Heart left ventricle (tissue), 16 donors: ENCODE measurements at regions of chr5 and their contacts with region 1.

Region 1: DNA sequence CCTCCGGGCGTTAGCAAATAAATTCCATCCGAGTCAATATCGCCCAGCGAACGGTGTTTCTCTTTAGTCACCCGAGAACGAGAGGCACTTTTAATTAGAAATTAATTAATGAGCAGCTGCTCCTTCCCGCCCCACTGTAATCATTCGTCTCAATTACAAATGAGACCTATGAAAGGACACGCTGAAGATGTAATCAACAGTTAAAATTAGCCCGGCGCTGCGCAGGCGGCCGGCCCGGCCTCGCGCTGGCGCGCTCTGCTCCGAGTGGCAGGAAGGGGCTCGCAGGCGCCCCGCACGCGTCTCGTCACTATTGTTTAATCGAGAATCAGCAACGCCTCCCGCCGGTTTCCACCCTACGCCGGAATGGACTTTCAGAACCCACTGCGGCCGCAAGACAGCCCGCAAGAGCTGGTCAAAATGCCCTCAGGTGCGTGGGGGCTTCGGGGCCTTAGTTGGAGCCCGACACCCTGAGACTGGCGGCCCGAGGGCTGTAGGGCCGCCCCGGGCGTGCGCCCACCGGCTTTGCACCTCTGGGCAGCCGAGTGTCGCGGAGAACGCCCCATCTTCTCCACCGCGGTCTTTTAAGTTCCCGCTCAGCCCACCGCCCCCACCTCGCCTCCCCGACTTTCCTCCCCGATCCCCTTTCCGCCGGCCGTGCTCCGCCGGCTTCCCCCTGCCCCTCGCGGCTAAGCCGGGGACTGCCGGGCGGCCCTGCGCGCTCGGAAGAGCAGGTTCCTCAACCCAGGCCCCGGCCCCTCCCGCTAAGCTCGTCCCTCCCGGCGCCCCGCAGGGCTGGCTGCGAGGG is 597 bp upstream of the IRX4 start:
- DNase-seq: peak in 3 of 5 donors; percentile 56 to 65 (median 58)
- ATAC-seq: peak in 3 of 4 donors; percentile 47 to 62 (median 52)
- H3K4me3 ChIP-seq: peak overlapping the region; percentile 13 to 61 (median 48)
- H3K27ac ChIP-seq: peak overlapping the region in 11 of 12 donors; percentile 32 to 87 (median 71)
- H3K4me1 ChIP-seq: peaks cover 0 to 64% (median 17%) of the 10 kb centered on the region in 12 donors
- H3K27me3 ChIP-seq: peaks cover 30 to 95% (median 59%) of the 10 kb centered on the region in 9 donors
- CTCF ChIP-seq: peak in 7 of 12 donors; percentile 4 to 47 (median 26)
- POLR2A ChIP-seq: peak in 1 of 2 donors; percentile 26

Region 2: GRCh38 chr5:1808439-1808838 is 74.9 kb before region 1 on chr5:
- intact Hi-C with region 1: loop called in 6 of 10 experiments (anchors 5 to 10 kb)
- DNase-seq: no peak
- ATAC-seq: no peak
- H3K4me3 ChIP-seq: no peak overlapping the region
- H3K27ac ChIP-seq: no peak overlapping the region
- H3K4me1 ChIP-seq: peaks cover 0 to 61% (median 13%) of the 10 kb centered on the region in 12 donors
- H3K27me3 ChIP-seq: no peaks in the 10 kb centered on the region
- CTCF ChIP-seq: no peak
- POLR2A ChIP-seq: no peak

Region 3: GRCh38 chr5:1930880-1931603 is 47.7 kb after region 1 on chr5:
- intact Hi-C with region 1: loop called in 1 of 10 experiments (anchors 5 kb)
- DNase-seq: peak in 4 of 5 donors; percentile 25 to 76 (median 50)
- ATAC-seq: peak; percentile 63 to 87 (median 78)
- H3K4me3 ChIP-seq: peak overlapping the region; percentile 31 to 70 (median 58)
- H3K27ac ChIP-seq: peak overlapping the region; percentile 46 to 91 (median 82)
- H3K4me1 ChIP-seq: peaks cover 0 to 14% (median 0%) of the 10 kb centered on the region in 12 donors
- H3K27me3 ChIP-seq: peaks cover 0 to 29% (median 0%) of the 10 kb centered on the region in 9 donors
- CTCF ChIP-seq: no peak
- POLR2A ChIP-seq: no peak

Region 4: DNA sequence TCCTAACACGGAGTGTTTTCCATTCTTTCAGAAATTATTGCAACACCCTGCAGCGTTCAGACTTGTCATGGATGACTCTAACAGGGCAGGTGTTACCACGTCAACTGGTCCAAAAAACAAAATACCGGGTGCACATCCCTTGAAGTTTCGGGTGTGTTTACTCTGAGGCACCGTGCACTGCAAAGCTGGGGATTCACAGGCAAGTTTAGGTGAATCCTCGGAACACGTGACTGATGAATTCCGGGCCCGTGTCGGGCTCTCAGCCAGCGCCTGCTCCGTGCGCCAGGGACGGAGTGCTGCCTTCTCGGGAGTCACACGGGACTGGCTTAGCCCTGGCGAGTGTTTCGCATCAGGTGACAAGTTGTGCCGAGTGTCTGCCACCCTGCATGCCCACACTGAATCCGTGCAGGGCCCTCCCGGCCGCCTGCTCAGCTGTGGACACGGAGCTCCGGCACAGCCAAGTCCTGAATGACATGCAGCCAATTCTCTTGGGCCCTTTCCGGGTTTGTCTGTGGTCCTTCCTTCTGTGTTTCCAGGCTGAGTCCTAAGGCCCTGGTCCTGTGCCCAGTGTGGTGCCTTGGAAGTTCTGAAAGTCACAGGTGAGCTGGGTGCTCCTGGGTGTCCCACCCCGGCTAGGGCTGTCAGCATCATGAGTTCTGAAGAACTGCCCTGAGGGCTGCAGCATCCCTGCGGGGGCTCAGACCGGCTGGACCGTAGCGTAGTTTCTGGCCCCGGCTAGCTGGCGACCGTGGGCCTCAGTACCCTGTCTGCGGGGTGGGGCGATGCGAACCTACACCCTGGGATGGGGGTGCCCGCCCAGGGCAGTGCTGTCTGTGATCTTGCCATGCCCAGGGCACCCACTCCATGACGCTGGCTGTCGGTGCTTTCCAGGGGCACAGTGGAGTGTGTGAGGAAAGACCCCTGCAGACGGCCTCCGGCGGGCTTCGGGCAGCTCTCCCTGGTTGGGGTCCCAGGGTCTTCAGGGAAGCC is 65.6 kb after region 1 on chr5:
- intact Hi-C with region 1: loop called in 3 of 10 experiments (anchors 5 to 10 kb)
- DNase-seq: peak; percentile 70 to 90 (median 78)
- ATAC-seq: peak; percentile 86 to 92 (median 90)
- H3K4me3 ChIP-seq: peak overlapping the region in 6 of 12 donors; percentile 5 to 21 (median 14)
- H3K27ac ChIP-seq: peak overlapping the region in 10 of 12 donors; percentile 23 to 93 (median 60)
- H3K4me1 ChIP-seq: peaks cover 0 to 36% (median 18%) of the 10 kb centered on the region in 12 donors
- H3K27me3 ChIP-seq: peaks cover 0 to 3% (median 0%) of the 10 kb centered on the region in 9 donors
- CTCF ChIP-seq: no peak
- POLR2A ChIP-seq: no peak

Region 5: GRCh38 chr5:1967736-1968135 is 84.4 kb after region 1 on chr5:
- intact Hi-C with region 1: no loop called
- DNase-seq: no peak
- ATAC-seq: peak in 1 of 4 donors; percentile 26
- H3K4me3 ChIP-seq: no peak overlapping the region
- H3K27ac ChIP-seq: no peak overlapping the region
- H3K4me1 ChIP-seq: no peaks in the 10 kb centered on the region
- H3K27me3 ChIP-seq: no peaks in the 10 kb centered on the region
- CTCF ChIP-seq: no peak
- POLR2A ChIP-seq: no peak

Region 6: DNA sequence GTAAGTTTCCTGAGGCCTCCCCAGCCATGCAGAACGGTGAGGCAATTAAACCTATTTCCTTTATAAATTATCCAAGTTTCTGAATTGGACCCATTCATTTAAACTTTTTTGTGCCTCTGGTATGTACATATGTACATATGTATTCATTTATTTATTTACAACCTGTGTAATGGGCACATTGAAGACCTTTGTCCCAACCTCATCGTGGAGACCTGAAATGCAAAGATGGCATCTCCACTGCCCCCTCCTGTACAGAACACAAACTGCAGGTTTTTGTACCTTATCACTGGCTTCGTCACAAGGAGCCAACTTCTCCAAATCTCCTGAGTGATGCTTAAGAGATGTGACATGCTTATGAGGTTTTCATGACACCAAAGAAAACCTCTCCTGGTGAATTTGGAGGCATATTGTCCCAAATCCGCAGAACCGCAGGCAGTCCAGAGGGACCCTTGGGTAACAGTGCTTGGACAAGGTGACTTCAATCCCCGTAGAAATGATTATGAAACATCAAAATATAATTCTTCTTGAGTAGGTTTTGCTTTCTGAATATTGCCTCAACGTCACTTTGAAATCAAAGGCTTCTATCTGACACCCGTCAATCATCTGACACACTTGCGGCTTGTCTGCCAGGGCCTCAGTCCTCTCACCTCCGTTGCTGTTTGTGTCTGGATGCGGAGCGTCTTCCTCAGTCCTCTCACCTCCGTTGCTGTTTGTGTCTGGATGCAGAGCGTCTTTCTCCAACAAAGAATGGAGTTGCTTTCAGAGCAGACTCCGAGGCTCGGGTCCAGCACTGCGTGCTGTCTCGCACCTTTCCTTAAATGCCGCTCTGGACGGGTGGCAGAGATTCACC is 134.4 kb after region 1 on chr5:
- intact Hi-C with region 1: loop called in 1 of 10 experiments (anchors 10 kb)
- DNase-seq: no peak
- ATAC-seq: no peak
- H3K4me3 ChIP-seq: no peak overlapping the region
- H3K27ac ChIP-seq: no peak overlapping the region
- H3K4me1 ChIP-seq: peaks cover 0 to 7% (median 0%) of the 10 kb centered on the region in 12 donors
- H3K27me3 ChIP-seq: peaks cover 0 to 4% (median 0%) of the 10 kb centered on the region in 9 donors
- CTCF ChIP-seq: peak in 8 of 12 donors; percentile 12 to 43 (median 26)
- POLR2A ChIP-seq: no peak